RWPE1 (cell line): ENCODE measurements at regions of chr6 and their contacts with region 1.

Region 1: DNA sequence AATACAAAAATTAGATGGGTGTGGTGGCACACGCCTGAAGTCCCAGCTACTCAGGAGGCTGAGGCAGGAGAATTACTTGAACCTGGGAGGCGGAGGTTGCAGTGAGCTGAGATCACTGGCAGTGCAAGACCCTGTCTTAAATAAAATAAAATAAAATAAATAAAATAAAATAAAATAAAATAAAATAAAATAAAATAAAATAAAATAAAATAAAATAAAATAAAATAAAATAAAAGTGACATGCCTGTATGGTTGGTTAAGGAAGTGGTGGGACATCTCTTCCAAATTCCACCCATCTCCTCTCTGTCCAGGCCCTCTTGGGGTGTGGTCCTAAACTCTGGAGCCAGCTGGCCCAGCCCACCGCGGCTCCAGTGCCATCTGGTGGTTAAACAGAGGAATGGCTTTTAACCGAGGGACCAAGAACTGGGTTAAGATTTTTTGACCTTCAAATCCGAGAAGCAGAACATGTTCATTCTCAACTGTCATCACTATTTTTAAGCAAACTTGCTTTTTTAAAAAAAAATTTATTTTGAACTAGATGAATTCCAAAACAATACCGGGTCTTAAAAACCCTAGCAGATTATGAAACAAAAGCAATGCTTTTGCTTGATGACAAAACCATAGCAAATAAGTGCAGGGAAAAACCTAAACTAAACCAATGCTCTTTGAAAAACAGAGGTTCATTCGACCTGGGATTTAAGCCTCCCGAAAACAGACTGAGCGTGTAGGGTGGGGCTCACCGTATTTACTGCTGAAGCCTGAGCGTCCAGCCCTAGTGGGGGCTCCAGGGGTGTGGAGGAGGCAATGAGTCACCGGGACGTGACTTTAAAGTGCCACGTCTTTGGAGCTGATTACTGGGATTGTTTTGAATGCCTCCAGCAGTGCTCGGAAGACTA is 68.8 kb downstream of the CDC5L start:
- DNase-seq: peak; percentile 75
- H3K27ac ChIP-seq: peak overlapping the region; percentile 56
- CTCF ChIP-seq: peak; percentile 83

Region 2: GRCh38 chr6:44135875-44136274 is 320.4 kb before region 1 on chr6:
- CTCF ChIA-PET with region 1: no interaction called
- POLR2A ChIA-PET with region 1: no interaction called
- DNase-seq: no peak
- H3K27ac ChIP-seq: no peak overlapping the region
- CTCF ChIP-seq: no peak

Region 3: DNA sequence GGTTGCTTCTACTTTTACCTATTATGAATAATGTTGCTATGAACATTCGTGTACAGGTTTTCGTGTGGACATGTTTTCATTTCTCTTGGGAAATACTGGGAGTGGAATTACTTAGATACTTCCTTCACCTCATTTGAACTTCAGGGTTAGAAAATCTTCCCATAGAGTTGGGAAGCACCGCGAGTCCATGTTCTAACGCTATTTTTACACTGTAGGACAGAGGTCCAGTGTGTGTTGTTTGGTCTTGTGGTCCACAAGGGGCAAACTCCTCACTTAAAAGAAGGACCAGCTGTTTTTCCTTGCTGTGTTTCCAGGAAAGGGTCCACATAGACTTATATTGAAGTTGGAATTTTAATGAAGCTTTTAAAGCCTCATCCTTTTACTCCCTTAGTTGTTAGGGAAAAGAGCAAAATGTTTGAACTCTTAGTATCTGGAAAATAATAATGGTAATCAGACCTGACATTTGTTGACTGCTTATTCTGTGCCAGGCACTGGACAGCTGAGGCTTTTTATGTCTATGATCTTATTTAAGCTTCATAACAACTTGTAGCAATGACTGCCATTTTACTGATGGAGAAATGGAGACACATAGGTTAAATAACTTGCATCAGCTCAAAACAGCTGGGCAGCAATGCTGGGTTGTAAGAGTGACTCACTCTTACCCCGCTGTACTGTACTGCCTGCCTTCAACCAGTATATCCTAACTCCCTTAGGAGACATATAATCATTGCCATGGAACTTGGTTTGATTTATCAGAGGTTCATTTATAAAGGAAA is 16.9 kb before region 1 on chr6:
- CTCF ChIA-PET with region 1: interaction called, 11 read pairs
- POLR2A ChIA-PET with region 1: no interaction called
- DNase-seq: no peak
- H3K27ac ChIP-seq: no peak overlapping the region
- CTCF ChIP-seq: no peak